Posterior vena cava (tissue), 2 donors: ENCODE measurements at regions of chrX and their contacts with region 1.

Region 1: DNA sequence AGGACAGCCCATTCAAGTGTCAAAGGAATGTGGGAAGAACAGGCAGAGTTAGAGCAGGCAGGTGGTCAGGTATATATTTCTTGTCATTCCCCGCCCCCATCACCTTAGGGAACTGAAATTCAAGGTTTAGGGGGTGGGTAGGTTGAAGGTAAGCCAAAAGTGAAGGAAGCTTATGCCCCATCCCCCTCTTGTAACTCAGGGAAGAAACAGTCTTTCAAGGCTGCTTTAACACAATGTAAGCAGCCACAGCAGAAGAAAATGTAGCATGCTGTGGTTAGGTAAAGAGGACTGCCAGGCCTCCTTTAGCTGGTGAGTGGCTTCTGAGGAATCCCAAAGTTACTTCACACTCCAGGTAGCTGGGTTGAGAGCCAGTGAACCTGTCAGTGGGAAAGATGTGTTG is 122.3 kb downstream of the RS1 start:
- DNase-seq: no peak

Region 2: DNA sequence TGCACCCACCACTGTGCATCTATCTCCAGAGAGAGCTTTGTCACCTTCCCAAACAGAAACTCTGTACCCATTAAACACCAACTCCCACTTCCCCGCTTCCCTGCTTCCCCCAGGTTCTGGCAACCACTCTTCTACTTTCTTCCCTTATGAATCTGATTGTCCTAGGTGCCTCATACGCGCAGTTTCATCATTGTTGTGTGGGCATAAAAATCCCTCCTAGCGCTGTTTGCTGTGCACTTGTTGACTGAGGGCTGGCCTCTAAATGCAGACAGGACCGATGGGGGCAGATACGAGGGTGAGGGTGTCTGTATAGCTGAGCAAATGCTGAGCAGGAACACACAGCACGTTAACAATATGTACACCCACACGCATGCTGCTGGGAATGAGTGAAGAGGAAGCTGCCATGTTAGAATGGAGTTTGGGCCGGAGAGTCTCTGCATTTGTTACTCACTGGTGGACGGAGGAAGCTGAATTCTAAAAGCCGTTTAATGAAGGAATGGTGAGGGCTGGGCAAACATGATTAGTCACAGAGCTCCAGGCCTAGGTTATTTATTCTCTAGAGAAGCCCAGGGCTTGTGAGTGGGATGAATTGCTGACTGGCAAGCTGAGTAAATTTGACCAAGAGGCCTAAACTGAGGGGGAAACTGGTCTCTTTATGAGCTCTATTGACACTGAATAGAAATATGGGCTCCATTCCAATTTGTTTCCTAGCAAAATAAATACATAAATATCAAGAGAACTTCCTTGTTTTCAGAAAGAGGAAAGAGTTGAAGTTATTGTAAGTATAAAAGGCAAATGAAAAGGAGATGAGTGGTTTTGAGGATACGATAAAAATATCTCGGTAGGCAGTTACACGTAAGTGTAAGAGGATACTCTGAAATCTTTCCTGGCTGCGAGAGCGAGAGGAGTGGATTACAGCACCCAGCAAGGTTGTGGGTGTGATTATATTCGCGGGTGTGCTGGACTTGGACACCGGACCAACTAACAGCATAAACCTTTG is 1812.9 kb after region 1 on chrX:
- intact Hi-C with region 1: loop called in 1 of 2 experiments (anchors 5 kb)
- DNase-seq: no peak

Region 3: DNA sequence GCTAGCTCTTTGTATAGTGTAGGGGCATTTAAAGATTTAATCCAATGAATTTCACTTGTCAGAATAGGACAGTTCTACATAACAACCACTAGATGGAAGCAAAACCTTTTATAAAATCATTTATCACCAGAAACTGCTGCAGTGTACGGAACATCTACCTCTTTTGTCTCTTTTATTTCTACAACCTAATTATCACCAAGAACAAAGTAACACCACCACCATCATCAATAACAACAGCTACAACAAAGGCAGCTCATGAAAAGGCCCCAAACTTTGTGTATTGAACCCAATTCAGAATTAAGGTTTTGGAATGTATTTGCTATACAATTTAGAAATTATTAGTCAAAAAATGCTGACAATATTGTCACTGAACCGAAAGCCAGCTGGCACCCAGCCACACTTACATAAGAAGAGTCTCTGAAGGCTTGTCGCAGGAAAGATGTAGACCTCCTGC is 1977.9 kb after region 1 on chrX:
- intact Hi-C with region 1: no loop called
- DNase-seq: no peak